ENCODE measurements at regions of chr16 and their contacts with region 1.

Region 1: DNA sequence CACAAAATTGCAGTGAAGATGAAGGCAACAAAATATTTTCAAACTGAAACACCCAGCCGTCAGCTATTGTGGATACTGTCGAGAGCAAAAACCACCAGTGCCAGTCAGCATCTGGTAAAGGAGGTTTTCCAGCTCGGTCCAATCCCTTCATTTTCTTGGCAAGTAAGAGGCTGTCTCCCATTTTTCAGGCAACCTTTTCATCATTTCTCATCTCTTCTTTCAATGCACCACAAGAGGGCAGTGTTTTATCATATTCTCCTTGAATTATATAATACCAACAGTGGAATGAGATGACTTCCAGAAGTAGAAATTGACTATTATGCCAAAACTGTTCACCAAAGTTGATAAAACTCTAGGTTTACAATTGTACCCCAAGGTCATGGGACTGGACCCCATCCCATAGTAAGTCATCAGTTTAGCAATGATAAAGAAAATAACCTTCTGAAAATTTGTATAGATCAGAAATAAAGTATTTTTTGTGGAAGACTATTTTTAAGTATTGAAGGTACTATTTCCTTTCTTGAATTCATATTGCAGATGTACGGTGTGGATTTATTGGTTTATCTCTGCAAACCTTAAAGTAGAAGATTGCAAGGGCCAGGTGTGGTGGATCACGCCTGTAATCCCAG is 16.8 kb downstream of the NQO1 start:
- DNase-seq: no peak
- H3K4me3 ChIP-seq: peak overlapping the region in 1 of 59 donors; percentile 26
- H3K27ac ChIP-seq: peak overlapping the region in 57 of 59 donors; percentile 1 to 87 (median 72)
- H3K27me3 ChIP-seq: no peaks in the 10 kb centered on the region
- CTCF ChIP-seq: peak; percentile 69 to 93 (median 86)

Region 2: DNA sequence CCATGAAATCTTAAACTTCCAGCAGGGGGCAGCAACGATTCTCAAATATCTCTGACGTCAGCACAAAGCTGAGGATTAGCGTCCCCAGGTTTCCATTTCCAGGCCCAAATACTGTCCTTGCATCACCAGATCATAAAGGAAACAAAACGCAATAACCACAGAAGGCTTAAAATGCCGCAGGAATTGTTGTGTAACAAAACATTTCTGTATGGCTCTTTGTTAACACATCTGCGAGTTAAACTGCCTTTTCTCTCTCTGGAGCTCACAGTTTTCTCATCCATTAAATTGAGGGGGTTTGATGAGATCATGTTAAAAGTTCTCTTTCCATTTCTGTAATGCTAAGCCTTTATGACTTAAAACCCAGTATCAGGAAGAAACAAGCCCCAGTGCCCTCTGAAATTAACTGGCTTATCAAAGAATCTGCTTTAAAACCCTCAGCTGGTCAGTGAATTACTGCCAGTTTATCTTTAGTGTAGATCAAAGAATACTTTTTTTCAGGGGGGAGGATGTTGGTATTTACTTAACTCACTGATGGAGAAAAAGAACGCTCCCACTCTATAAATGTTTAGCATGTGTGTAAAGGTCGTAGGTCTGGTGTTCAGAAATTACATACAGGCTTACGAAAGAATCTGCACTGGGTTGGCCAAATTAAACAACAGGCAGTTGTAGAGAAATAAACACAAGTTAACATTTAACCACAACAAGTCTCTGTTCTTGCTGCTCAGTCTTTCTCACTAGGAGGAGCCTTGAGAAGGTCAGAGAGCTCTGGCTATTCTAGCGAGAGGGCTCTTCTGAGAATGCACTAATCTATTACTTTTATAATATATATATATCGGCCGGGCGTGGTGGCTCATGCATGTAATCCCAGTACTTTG is 313.1 kb before region 1 on chr16:
- intact Hi-C with region 1: loop called (anchors 5 kb)
- DNase-seq: peak in 7 of 10 donors; percentile 49 to 81 (median 66)
- H3K4me3 ChIP-seq: peak overlapping the region in 23 of 59 donors; percentile 1 to 41 (median 18)
- H3K27ac ChIP-seq: peak overlapping the region; percentile 17 to 95 (median 83)
- H3K27me3 ChIP-seq: no peaks in the 10 kb centered on the region
- CTCF ChIP-seq: peak; percentile 69 to 92 (median 82)